Naive thymus-derived CD4-positive, alpha-beta T cell (primary cell): ENCODE measurements at regions of chr12 and their contacts with region 1.

Region 1: DNA sequence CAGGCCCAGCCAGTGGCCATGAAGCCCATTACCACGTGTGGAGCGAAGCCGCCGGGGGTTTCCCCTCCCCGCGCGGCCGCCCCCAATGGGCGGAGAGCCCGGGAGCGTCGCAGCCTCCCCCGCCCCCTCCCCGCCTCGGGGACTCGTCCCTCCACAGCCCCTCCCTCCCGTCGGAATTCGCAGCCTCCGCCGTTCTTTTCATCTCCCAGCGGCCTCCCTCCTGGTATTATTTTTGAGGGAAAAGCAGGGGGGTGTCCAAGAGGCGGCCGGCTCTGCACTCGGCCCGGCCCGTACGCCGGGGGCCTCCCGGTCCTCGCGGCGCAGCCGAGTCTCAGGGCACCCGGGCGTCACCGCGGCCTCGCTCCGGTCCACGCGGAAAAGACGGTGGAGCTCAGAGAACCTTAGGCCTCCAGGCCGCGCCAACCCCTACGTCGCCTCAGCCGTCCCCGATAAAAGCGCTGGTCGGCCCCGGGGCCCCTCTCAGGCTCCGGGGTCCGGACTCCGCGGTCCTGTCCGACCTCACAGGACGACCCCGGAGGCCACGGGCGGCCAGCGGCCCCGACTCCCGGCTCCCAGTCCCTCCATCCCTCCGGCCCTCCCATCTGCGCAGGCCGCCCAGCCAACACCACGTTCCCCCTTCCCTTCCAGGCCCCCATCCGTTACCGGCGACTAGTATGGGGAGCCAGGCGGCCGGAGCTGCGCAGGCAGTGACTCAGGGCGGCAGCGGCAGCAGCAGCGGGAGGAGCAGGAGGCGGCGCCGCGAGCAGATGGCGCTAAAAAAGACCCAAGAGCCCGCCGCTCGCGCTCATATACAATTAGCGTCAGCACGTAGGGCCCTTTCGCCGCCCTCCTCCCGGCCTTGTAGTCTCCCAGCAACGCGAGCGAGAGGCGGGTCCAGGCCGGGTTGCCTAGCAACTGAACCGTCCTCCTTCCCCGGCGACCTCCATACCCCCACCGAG is at the start of gene NAP1L1:
- DNase-seq: peak; percentile 85 to 96 (median 93)
- ATAC-seq: peak; percentile 87
- H3K4me3 ChIP-seq: peak within 1 kb of the TSS; percentile 79
- H3K4me3 Mint-ChIP-seq: peak within 1 kb of the TSS; percentile 91 to 100 (median 98)
- H3K27ac ChIP-seq: peak within 1 kb of the TSS; percentile 100
- H3K27ac Mint-ChIP-seq: peak within 1 kb of the TSS; percentile 84 to 100 (median 99)
- H3K4me1 ChIP-seq: peaks cover 27 to 28% of the 10 kb centered on the region in 2 donors
- H3K4me1 Mint-ChIP-seq: peaks cover 30 to 59% (median 54%) of the 10 kb centered on the region in 7 donors
- H3K27me3 ChIP-seq: no peaks in the 10 kb centered on the region
- H3K27me3 Mint-ChIP-seq: no peaks in the 10 kb centered on the region
- total RNA-seq, gene NAP1L1: 510 to 862 (median 625) TPM

Region 2: DNA sequence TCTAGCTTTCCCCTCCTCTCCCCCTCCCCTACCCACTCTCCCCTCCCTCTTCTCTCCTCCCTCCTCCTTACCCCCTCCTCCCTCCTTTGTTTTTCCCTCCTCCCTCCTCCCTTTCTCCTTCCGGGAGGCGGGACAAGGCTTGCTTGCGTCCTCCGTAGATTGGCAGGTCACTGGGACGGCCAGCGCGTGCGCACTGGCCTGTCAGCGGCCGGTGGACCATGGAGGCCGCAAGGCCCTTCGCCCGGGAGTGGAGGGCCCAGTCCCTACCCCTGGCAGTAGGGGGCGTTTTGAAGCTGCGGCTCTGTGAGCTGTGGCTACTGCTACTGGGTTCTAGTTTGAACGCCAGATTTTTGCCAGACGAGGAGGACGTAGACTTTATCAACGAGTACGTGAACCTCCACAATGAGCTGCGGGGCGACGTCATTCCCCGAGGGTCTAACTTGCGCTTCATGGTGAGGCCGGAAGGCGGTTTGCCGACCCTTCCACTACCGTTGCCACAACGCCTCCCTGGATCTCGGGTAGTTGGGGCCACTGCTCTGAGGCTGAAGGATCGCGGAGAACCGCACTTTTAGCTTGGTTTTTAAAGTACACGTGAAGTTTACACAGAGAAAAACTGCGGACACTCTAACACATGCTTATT is 693.2 kb before region 1 on chr12 and contains the start of gene GLIPR1L2:
- CTCF ChIA-PET with region 1: no interaction called
- POLR2A ChIA-PET with region 1: no interaction called
- intact Hi-C with region 1: loop called (anchors 1 kb)
- DNase-seq: peak; percentile 75 to 86 (median 80)
- ATAC-seq: peak; percentile 96
- H3K4me3 ChIP-seq: peak within 1 kb of the TSS; percentile 67
- H3K4me3 Mint-ChIP-seq: peak within 1 kb of the TSS; percentile 87 to 98 (median 94)
- H3K27ac ChIP-seq: peak within 1 kb of the TSS; percentile 79
- H3K27ac Mint-ChIP-seq: peak within 1 kb of the TSS; percentile 93 to 99 (median 98)
- H3K4me1 ChIP-seq: peaks cover 14 to 19% of the 10 kb centered on the region in 2 donors
- H3K4me1 Mint-ChIP-seq: peaks cover 26 to 61% (median 44%) of the 10 kb centered on the region in 7 donors
- H3K27me3 ChIP-seq: no peaks in the 10 kb centered on the region
- H3K27me3 Mint-ChIP-seq: peaks cover 0 to 3% (median 0%) of the 10 kb centered on the region in 5 donors
- total RNA-seq, gene GLIPR1L2: 0.22 to 2.3 (median 0.38) TPM

Region 3: DNA sequence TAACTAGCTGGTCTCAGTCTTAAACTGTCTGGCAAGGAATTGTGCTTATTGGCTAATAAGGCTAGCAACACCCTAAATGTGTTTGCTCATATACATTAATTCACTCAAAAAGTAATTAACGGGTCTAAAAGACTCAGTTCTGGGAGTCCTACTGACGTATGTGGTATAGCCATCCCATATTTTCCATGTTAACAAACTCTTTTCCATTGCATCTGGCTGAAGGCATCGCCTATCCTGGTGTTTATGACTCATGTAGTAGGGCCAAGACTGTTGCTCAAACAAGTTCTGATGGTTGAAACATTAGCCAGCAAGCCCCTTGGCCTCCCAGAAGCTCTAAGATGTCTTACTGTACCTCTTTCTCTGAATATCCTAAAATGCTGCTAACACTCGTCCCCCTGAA is 151.1 kb before region 1 on chr12:
- CTCF ChIA-PET with region 1: no interaction called
- POLR2A ChIA-PET with region 1: no interaction called
- intact Hi-C with region 1: loop called in 1 of 2 experiments (anchors 2 kb)
- DNase-seq: no peak
- ATAC-seq: no peak
- H3K4me3 ChIP-seq: no peak overlapping the region
- H3K4me3 Mint-ChIP-seq: no peak overlapping the region
- H3K27ac ChIP-seq: no peak overlapping the region
- H3K27ac Mint-ChIP-seq: no peak overlapping the region
- H3K4me1 ChIP-seq: peaks cover 0 to 14% of the 10 kb centered on the region in 2 donors
- H3K4me1 Mint-ChIP-seq: peaks cover 0 to 26% (median 9%) of the 10 kb centered on the region in 7 donors
- H3K27me3 ChIP-seq: no peaks in the 10 kb centered on the region
- H3K27me3 Mint-ChIP-seq: peaks cover 0 to 16% (median 2%) of the 10 kb centered on the region in 5 donors

Region 4: GRCh38 chr12:76010732-76011458 is 73.3 kb before region 1 on chr12:
- CTCF ChIA-PET with region 1: no interaction called
- POLR2A ChIA-PET with region 1: no interaction called
- intact Hi-C with region 1: no loop called
- DNase-seq: no peak
- ATAC-seq: no peak
- H3K4me3 ChIP-seq: no peak overlapping the region
- H3K4me3 Mint-ChIP-seq: no peak overlapping the region
- H3K27ac ChIP-seq: no peak overlapping the region
- H3K27ac Mint-ChIP-seq: no peak overlapping the region
- H3K4me1 ChIP-seq: no peaks in the 10 kb centered on the region
- H3K4me1 Mint-ChIP-seq: peaks cover 0 to 9% (median 0%) of the 10 kb centered on the region in 7 donors
- H3K27me3 ChIP-seq: no peaks in the 10 kb centered on the region
- H3K27me3 Mint-ChIP-seq: peaks cover 0 to 3% (median 0%) of the 10 kb centered on the region in 5 donors

Region 5: GRCh38 chr12:76020731-76021672 is 63.2 kb before region 1 on chr12:
- CTCF ChIA-PET with region 1: no interaction called
- POLR2A ChIA-PET with region 1: no interaction called
- intact Hi-C with region 1: loop called in 1 of 2 experiments (anchors 2 kb)
- DNase-seq: peak in 8 of 9 donors; percentile 32 to 65 (median 54)
- ATAC-seq: peak; percentile 87
- H3K4me3 ChIP-seq: peak overlapping the region; percentile 21
- H3K4me3 Mint-ChIP-seq: peak overlapping the region in 9 of 10 donors; percentile 33 to 74 (median 67)
- H3K27ac ChIP-seq: peak overlapping the region; percentile 43
- H3K27ac Mint-ChIP-seq: peak overlapping the region; percentile 84 to 98 (median 90)
- H3K4me1 ChIP-seq: peaks cover 15 to 17% of the 10 kb centered on the region in 2 donors
- H3K4me1 Mint-ChIP-seq: peaks cover 6 to 56% (median 21%) of the 10 kb centered on the region in 7 donors
- H3K27me3 ChIP-seq: no peaks in the 10 kb centered on the region
- H3K27me3 Mint-ChIP-seq: no peaks in the 10 kb centered on the region

Region 6: DNA sequence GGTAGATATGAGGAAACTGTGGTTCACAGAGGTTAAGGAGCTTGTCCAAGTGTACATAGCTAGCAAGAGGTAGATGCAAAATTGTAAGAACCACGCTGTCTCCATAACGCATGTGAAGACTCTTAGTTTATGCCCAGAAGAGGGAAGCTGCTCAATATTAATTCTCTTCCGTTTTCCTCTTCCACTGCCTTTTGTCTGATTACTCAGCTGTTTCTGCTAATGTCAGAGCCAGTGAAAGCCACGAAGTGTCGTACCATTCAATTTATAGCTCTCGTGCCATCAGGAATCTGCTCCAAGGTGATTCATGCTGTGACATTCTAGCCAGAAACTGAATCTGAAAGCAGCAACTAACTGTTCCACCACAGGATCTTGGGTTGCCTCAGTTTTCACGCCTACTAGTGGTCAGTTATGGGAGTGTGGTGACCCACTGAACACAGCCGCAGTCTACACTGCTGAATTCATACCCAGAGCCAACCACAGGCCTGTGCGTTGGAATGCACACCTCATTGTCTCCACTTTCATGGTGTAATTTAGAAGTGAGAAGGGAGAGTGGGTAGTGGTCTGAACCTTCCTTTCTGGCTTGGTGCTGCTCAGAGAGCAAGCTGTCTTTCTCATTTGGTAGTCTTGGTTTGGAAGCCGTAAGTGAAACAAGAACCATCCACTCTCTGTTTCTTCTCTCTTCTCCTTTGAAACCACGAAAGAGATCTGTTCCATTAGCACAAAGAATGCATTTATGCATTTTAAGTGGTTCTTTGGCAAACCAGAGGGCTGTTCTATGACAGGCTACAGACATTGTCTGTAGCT is 74.5 kb after region 1 on chr12:
- CTCF ChIA-PET with region 1: no interaction called
- POLR2A ChIA-PET with region 1: interaction called, 3 read pairs
- intact Hi-C with region 1: loop called (anchors 1 kb)
- DNase-seq: peak; percentile 9 to 88 (median 37)
- ATAC-seq: peak; percentile 95
- H3K4me3 ChIP-seq: no peak overlapping the region
- H3K4me3 Mint-ChIP-seq: peak overlapping the region; percentile 0 to 88 (median 69)
- H3K27ac ChIP-seq: no peak overlapping the region
- H3K27ac Mint-ChIP-seq: peak overlapping the region in 4 of 9 donors; percentile 54 to 80 (median 68)
- H3K4me1 ChIP-seq: no peaks in the 10 kb centered on the region
- H3K4me1 Mint-ChIP-seq: peaks cover 0 to 18% (median 10%) of the 10 kb centered on the region in 7 donors
- H3K27me3 ChIP-seq: no peaks in the 10 kb centered on the region
- H3K27me3 Mint-ChIP-seq: peaks cover 0 to 3% (median 0%) of the 10 kb centered on the region in 5 donors

Region 7: DNA sequence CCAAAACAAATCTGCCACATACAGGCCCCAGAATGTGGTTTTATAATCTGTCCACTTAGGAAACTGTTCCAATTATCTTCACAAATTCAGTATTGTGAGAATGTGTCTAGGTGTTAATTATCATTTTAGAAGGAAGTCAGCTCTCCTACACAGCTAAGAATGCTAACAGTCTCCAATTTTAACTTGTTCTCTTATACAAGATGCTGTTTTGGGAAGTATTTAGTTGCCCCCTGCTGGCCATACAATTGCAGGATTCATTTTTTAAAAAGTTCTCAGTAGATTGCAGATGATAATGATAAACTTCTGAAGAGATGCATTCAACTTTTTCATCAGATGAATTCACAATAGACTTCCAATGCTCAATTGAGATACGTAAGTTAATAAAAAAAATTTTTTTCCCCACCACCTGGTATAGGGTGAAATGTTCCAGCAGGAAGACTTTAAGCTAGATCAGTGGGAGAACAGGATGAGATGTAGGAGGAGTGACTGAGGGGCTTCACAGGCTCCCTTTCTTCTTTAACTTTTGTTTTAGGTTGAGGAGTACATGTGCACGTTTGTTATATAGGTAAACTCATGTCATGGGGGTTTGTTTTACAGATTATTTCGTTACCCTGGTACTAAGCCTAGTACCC is 502.7 kb after region 1 on chr12:
- CTCF ChIA-PET with region 1: no interaction called
- POLR2A ChIA-PET with region 1: no interaction called
- intact Hi-C with region 1: loop called (anchors 1 to 2 kb)
- DNase-seq: peak in 7 of 9 donors; percentile 34 to 70 (median 59)
- ATAC-seq: peak; percentile 77
- H3K4me3 ChIP-seq: no peak overlapping the region
- H3K4me3 Mint-ChIP-seq: no peak overlapping the region
- H3K27ac ChIP-seq: no peak overlapping the region
- H3K27ac Mint-ChIP-seq: peak overlapping the region in 1 of 9 donors; percentile 73
- H3K4me1 ChIP-seq: no peaks in the 10 kb centered on the region
- H3K4me1 Mint-ChIP-seq: peaks cover 0 to 6% (median 0%) of the 10 kb centered on the region in 7 donors
- H3K27me3 ChIP-seq: no peaks in the 10 kb centered on the region
- H3K27me3 Mint-ChIP-seq: no peaks in the 10 kb centered on the region